ENCODE measurements at regions of chr20 and their contacts with region 1.

Region 1: DNA sequence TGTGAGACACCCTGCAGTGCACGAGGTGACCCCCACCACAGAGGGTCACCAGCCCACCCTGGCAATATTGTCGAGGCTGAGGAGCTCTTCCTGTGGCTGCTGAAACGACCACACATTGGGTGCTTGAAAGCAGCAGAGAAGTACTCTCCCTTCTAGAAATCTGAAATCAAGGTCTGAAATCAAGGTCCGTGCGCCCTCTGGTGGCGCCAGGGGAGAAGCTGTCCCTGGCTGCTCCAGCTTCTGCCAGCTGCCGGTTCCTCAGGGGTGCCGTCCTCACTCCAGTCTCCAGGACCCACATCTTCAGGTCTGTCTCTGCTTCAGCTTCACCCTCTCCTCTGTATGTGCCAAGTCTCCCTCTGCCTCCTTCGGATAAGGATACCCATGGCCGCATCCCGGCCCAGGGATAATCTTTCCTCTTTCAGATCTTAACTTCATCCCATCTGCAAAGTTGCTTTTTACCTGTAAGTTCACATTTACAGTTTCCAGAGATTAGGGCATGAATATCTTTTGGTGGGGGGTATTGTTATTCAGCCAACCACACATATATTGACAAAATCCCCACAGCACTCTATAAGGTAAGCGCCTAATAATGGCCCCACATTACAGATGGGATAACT is 108.3 kb upstream of the PHACTR3 start:
- DNase-seq: peak; percentile 79
- H3K27ac ChIP-seq: no peak overlapping the region
- CTCF ChIP-seq: peak; percentile 99

Region 2: GRCh38 chr20:58065508-58066361 is 1430.3 kb before region 1 on chr20:
- CTCF ChIA-PET with region 1: interaction called, 10 read pairs
- POLR2A ChIA-PET with region 1: no interaction called
- DNase-seq: peak; percentile 68
- H3K27ac ChIP-seq: no peak overlapping the region
- CTCF ChIP-seq: no peak

Region 3: GRCh38 chr20:59508729-59509128 is 12.7 kb after region 1 on chr20:
- CTCF ChIA-PET with region 1: interaction called, 12 read pairs
- POLR2A ChIA-PET with region 1: no interaction called
- DNase-seq: no peak
- H3K27ac ChIP-seq: no peak overlapping the region
- CTCF ChIP-seq: no peak